GM10248 (cell line): ENCODE measurements at regions of chr5 and their contacts with region 1.

Region 1: DNA sequence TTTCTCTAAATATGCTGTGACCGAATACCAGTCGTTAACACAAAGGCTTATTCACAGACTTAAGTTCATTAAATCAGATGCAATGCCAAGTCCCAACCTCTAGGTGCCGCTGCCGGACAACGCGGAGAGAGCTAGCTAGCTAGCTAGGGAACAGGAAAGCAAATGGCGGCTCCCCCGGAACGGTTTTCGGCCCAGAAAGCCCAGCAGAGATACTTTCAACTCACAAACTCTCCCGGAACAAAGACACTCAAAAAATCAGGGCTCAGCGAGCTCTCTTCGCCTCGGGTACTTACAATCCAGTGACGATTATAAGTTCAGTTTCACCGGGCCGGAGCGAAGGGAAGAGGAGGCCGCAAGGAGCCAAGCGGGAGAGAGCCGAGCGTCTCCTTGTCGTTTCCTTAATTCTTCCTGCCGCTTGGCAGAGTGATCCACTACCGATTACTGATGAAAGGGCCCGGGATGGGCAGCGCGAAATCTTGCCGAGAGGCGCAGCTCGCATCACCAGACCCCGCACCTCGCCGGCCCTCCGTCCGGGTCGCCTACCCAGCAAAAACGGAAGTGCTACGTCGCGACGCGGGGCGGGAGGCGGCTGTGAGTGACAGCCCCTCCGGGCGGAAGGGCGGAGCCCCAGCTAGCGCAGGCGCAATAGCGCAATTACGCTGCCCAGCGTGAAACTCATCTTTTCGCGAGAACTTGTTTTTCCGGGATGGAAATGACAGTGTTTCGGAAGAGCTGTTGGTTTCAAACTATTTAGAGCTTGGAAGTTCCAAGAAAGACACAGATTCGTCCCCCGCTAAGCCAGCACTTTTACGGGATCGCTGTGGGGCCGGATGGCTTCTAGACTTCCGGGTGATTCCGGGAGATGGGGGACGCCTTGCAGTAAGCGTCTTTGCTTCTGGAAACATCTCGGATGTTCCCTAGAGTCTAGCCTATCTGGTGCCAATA is at the start of gene TAF7:
- DNase-seq: peak; percentile 93
- CTCF ChIP-seq: peak; percentile 95

Region 2: DNA sequence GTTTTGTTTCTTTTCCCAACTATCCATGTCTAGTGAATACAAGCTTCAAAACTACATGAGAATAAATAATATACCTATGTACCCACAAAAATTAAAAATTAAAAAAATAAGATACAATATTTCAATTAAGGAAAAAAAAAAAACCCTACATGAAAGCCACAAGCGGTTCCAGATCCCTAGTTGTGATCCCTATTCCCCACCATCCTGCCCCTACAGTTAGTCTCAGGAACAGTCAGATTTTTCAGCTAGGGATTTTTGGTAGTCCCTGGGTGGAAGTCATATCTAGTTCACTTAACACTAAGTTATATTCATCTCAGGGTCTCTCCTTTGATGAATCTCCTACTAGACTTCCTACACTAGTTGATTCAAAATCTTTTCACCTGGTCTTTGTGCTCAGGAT is 287.9 kb before region 1 on chr5:
- CTCF ChIA-PET with region 1: no interaction called
- POLR2A ChIA-PET with region 1: no interaction called
- DNase-seq: no peak
- CTCF ChIP-seq: no peak

Region 3: GRCh38 chr5:141272906-141273305 is 47.6 kb before region 1 on chr5:
- CTCF ChIA-PET with region 1: no interaction called
- POLR2A ChIA-PET with region 1: no interaction called
- DNase-seq: no peak
- CTCF ChIP-seq: no peak

Region 4: DNA sequence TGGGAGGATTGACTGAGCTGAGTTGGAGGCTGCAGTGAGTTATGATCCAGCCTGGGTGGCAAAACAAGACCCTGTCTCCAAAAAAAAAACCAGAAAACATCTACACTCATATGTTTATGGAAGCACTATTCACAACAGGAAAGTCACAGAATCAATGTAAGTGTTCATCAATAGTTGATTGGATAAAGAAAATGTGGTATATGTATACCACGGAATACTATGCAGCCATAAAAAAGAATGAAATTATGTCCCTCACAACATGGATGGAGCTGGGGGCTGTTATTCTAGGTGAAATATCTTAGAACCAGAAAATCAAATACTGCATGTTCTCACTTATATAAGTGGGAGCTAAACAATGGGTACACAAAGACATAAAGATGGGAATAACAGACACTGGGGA is 13.9 kb before region 1 on chr5:
- CTCF ChIA-PET with region 1: interaction called, 10 read pairs
- POLR2A ChIA-PET with region 1: no interaction called
- DNase-seq: no peak
- CTCF ChIP-seq: no peak

Region 5: DNA sequence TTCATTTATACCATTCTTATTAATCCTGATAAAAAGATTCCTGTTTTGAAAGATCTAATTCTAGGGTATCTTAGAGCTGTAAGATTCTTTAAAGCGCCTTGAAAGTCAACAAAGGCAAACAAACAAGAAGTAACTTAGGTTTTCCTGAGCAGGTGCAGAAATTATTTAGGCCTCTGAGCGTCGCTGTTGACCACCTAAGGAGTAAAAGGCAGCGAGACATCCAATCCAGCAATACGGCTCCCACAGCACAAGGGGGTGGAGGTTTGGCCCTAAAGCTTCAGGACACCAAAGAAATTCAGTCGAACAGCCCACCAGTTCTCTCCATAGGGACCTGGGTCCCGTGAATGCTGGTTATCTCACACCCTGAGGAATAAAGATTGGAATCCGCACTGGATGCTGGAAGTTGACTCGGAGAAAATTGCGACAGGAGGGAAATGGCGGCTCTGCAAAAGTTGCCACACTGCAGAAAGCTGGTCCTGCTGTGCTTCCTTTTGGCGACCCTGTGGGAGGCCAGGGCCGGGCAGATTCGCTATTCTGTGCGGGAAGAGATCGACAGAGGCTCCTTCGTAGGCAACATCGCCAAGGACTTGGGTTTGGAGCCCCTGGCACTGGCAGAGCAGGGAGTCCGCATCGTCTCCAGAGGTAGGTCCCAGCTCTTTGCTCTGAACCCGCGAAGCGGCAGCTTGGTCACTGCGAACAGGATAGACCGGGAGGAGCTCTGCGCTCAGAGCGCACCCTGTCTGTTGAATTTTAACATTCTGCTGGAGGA is 18.2 kb after region 1 on chr5 and contains the start of gene PCDHGA2:
- CTCF ChIA-PET with region 1: interaction called, 20 read pairs
- POLR2A ChIA-PET with region 1: no interaction called
- DNase-seq: peak; percentile 47
- CTCF ChIP-seq: peak; percentile 35

Region 6: DNA sequence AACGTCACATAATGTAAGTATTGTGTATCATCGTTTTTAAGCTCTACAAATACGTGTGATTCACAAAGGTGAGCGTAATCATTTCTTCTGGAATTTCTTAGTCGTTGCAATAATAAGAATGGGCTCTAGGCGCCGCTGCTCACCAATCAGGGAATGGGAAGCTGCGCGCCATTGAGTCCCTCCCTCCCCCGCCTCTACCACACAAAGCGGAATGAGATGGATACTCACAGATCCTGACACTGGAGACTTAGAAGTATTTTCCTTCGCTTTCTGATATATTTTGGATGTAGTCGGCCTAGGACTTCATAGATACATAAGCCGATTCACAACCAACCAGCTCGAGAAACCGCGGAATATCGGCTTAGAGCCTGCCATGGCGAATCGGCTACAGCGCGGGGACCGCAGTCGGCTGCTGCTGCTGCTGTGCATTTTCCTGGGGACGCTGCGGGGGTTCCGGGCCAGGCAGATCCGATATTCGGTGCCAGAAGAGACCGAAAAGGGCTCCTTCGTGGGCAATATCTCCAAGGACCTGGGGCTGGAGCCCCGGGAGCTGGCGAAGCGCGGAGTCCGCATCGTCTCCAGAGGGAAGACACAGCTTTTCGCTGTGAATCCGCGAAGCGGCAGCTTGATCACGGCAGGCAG is 100.5 kb after region 1 on chr5 and contains the start of gene PCDHGA11:
- CTCF ChIA-PET with region 1: interaction called, 14 read pairs
- POLR2A ChIA-PET with region 1: no interaction called
- DNase-seq: peak; percentile 69
- CTCF ChIP-seq: peak; percentile 71